ENCODE measurements at regions of chr2 and their contacts with region 1.

Region 1: DNA sequence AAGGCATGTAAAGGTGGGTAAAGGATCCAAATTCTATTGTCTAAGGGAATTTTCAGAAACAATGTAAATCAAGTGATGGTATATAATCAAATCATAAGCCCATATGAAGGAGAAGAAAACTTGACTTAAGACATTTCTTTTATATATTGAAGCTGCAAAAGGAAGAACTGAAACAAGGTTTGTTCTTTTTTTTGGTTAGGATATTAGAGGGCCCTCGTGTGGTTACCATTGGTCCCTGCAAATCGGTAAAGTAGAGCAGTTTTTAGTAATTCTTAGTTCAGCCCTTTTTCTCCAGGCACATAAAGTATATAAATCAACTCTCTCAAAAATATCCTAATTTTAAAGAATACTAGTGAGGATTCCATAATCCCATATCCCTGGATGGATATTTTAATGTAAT is 105.6 kb upstream of the STK17B start:
- DNase-seq: no peak
- H3K4me3 Mint-ChIP-seq: no peak overlapping the region
- H3K27ac Mint-ChIP-seq: no peak overlapping the region
- H3K4me1 Mint-ChIP-seq: peaks cover 20% of the 10 kb centered on the region
- H3K27me3 Mint-ChIP-seq: no peaks in the 10 kb centered on the region
- CTCF ChIP-seq: peak; percentile 64

Region 2: GRCh38 chr2:196041786-196042185 is 235.2 kb before region 1 on chr2:
- CTCF ChIA-PET with region 1: no interaction called
- POLR2A ChIA-PET with region 1: no interaction called
- intact Hi-C with region 1: no loop called
- DNase-seq: no peak
- H3K4me3 Mint-ChIP-seq: no peak overlapping the region
- H3K27ac Mint-ChIP-seq: no peak overlapping the region
- H3K4me1 Mint-ChIP-seq: no peaks in the 10 kb centered on the region
- H3K27me3 Mint-ChIP-seq: no peaks in the 10 kb centered on the region
- CTCF ChIP-seq: no peak

Region 3: DNA sequence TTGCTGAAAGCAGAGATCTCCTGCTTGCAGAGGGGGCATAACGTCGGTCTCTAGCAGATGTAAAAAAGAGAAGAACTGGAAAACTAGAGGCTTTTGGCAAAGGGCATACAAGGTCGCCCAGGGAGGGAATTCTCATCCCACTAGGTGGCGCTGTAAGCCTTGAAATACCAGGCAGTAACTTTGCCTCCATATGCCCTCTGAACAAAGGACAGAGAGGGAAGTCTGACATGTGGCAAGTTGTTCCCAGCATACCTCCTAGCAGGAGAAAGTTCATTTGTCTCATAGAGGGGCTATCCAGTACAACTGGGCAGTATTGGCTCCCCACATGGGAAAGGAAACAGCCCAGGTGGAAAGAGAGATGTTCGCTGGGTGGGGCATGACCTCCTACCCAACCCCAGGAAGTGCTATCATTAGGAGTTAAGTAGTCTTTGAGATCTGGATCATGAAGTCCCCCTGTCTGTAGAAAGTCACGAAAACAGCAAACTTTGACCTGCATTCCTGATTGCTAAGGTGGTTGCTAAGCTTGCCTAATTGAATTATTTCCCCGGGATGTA is 145.5 kb before region 1 on chr2:
- CTCF ChIA-PET with region 1: interaction called, 7 read pairs
- POLR2A ChIA-PET with region 1: no interaction called
- intact Hi-C with region 1: loop called (anchors 1 kb)
- DNase-seq: peak; percentile 73
- H3K4me3 Mint-ChIP-seq: no peak overlapping the region
- H3K27ac Mint-ChIP-seq: no peak overlapping the region
- H3K4me1 Mint-ChIP-seq: no peaks in the 10 kb centered on the region
- H3K27me3 Mint-ChIP-seq: no peaks in the 10 kb centered on the region
- CTCF ChIP-seq: peak; percentile 68

Region 4: GRCh38 chr2:196291873-196292800 is 15.1 kb after region 1 on chr2:
- CTCF ChIA-PET with region 1: interaction called, 10 read pairs
- POLR2A ChIA-PET with region 1: interaction called, 3 read pairs
- intact Hi-C with region 1: no loop called
- DNase-seq: peak; percentile 87
- H3K4me3 Mint-ChIP-seq: peak overlapping the region; percentile 4
- H3K27ac Mint-ChIP-seq: peak overlapping the region; percentile 31
- H3K4me1 Mint-ChIP-seq: peaks cover 36% of the 10 kb centered on the region
- H3K27me3 Mint-ChIP-seq: no peaks in the 10 kb centered on the region
- CTCF ChIP-seq: no peak

Region 5: GRCh38 chr2:196504788-196505187 is 227.8 kb after region 1 on chr2:
- CTCF ChIA-PET with region 1: no interaction called
- POLR2A ChIA-PET with region 1: no interaction called
- intact Hi-C with region 1: no loop called
- DNase-seq: no peak
- H3K4me3 Mint-ChIP-seq: no peak overlapping the region
- H3K27ac Mint-ChIP-seq: no peak overlapping the region
- H3K4me1 Mint-ChIP-seq: peaks cover 6% of the 10 kb centered on the region
- H3K27me3 Mint-ChIP-seq: no peaks in the 10 kb centered on the region
- CTCF ChIP-seq: no peak

Region 6: GRCh38 chr2:196566961-196567666 is 290.1 kb after region 1 on chr2:
- CTCF ChIA-PET with region 1: no interaction called
- POLR2A ChIA-PET with region 1: no interaction called
- intact Hi-C with region 1: no loop called
- DNase-seq: no peak
- H3K4me3 Mint-ChIP-seq: no peak overlapping the region
- H3K27ac Mint-ChIP-seq: no peak overlapping the region
- H3K4me1 Mint-ChIP-seq: no peaks in the 10 kb centered on the region
- H3K27me3 Mint-ChIP-seq: no peaks in the 10 kb centered on the region
- CTCF ChIP-seq: no peak